MCF 10A (cell line): ENCODE measurements at regions of chr11 and their contacts with region 1.

Region 1: GRCh38 chr11:68297812-68298658 is 14.4 kb upstream of the LRP5 start:
- DNase-seq: peak; percentile 71
- H3K4me3 Mint-ChIP-seq: no peak overlapping the region
- H3K27ac Mint-ChIP-seq: no peak overlapping the region
- H3K4me1 Mint-ChIP-seq: peaks cover 13% of the 10 kb centered on the region
- H3K27me3 Mint-ChIP-seq: no peaks in the 10 kb centered on the region
- CTCF ChIP-seq: peak; percentile 98

Region 2: GRCh38 chr11:68251765-68252164 is 46.3 kb before region 1 on chr11:
- CTCF ChIA-PET with region 1: interaction called, 150 read pairs
- POLR2A ChIA-PET with region 1: interaction called, 3 read pairs
- intact Hi-C with region 1: no loop called
- DNase-seq: no peak
- H3K4me3 Mint-ChIP-seq: no peak overlapping the region
- H3K27ac Mint-ChIP-seq: no peak overlapping the region
- H3K4me1 Mint-ChIP-seq: no peaks in the 10 kb centered on the region
- H3K27me3 Mint-ChIP-seq: no peaks in the 10 kb centered on the region
- CTCF ChIP-seq: no peak

Region 3: DNA sequence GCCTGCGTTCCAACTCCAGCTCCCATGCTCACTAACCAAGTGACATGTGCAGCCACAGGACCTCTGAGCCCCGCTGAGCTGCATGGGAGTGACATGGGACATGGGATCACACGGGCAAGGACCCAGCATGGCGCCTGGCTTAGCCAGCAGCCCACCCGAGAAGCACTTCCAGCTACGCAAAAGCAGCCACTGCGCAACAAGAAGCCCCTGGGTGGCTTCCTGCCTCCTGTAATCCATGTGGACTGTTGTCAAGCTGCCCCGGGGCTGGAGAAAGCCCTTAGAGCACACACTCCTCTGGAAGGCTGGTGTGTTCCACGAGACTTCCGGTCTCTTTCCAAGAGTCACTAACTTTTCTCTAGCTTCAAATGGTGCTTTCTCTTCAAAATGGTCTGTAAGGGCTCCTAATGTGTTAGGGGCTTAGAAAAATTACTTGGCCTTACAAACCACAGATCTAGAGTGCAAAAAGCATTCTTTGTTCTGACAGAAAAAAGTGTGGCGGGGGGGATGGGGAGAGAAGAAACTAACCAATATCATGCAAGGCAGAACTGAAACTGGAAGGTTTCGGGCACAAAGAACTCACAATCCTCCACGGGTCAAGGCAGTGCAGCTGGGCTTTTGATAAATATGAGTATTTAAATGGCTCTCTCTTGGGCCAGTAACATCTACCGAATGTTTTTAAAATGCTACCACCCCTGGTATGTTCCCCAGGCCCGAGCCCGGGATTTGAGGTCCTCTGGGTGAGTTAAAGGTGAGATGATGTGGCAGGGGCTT is 31.7 kb before region 1 on chr11:
- CTCF ChIA-PET with region 1: interaction called, 68 read pairs
- POLR2A ChIA-PET with region 1: interaction called, 18 read pairs
- intact Hi-C with region 1: loop called (anchors 1 kb)
- DNase-seq: no peak
- H3K4me3 Mint-ChIP-seq: no peak overlapping the region
- H3K27ac Mint-ChIP-seq: no peak overlapping the region
- H3K4me1 Mint-ChIP-seq: peaks cover 10% of the 10 kb centered on the region
- H3K27me3 Mint-ChIP-seq: no peaks in the 10 kb centered on the region
- CTCF ChIP-seq: no peak

Region 4: GRCh38 chr11:68287419-68287818 is 10.6 kb before region 1 on chr11:
- CTCF ChIA-PET with region 1: interaction called, 16 read pairs
- POLR2A ChIA-PET with region 1: interaction called, 6 read pairs
- intact Hi-C with region 1: no loop called
- DNase-seq: no peak
- H3K4me3 Mint-ChIP-seq: no peak overlapping the region
- H3K27ac Mint-ChIP-seq: no peak overlapping the region
- H3K4me1 Mint-ChIP-seq: peaks cover 9% of the 10 kb centered on the region
- H3K27me3 Mint-ChIP-seq: no peaks in the 10 kb centered on the region
- CTCF ChIP-seq: no peak

Region 5: GRCh38 chr11:68383976-68384501 is 86.0 kb after region 1 on chr11:
- CTCF ChIA-PET with region 1: interaction called, 29 read pairs
- POLR2A ChIA-PET with region 1: interaction called, 3 read pairs
- intact Hi-C with region 1: loop called (anchors 1 kb)
- DNase-seq: peak; percentile 54
- H3K4me3 Mint-ChIP-seq: no peak overlapping the region
- H3K27ac Mint-ChIP-seq: no peak overlapping the region
- H3K4me1 Mint-ChIP-seq: no peaks in the 10 kb centered on the region
- H3K27me3 Mint-ChIP-seq: no peaks in the 10 kb centered on the region
- CTCF ChIP-seq: peak; percentile 93

Region 6: GRCh38 chr11:68643585-68643984 is 345.6 kb after region 1 on chr11:
- CTCF ChIA-PET with region 1: no interaction called
- POLR2A ChIA-PET with region 1: no interaction called
- intact Hi-C with region 1: no loop called
- DNase-seq: no peak
- H3K4me3 Mint-ChIP-seq: no peak overlapping the region
- H3K27ac Mint-ChIP-seq: no peak overlapping the region
- H3K4me1 Mint-ChIP-seq: no peaks in the 10 kb centered on the region
- H3K27me3 Mint-ChIP-seq: peaks cover 80% of the 10 kb centered on the region
- CTCF ChIP-seq: no peak

Region 7: DNA sequence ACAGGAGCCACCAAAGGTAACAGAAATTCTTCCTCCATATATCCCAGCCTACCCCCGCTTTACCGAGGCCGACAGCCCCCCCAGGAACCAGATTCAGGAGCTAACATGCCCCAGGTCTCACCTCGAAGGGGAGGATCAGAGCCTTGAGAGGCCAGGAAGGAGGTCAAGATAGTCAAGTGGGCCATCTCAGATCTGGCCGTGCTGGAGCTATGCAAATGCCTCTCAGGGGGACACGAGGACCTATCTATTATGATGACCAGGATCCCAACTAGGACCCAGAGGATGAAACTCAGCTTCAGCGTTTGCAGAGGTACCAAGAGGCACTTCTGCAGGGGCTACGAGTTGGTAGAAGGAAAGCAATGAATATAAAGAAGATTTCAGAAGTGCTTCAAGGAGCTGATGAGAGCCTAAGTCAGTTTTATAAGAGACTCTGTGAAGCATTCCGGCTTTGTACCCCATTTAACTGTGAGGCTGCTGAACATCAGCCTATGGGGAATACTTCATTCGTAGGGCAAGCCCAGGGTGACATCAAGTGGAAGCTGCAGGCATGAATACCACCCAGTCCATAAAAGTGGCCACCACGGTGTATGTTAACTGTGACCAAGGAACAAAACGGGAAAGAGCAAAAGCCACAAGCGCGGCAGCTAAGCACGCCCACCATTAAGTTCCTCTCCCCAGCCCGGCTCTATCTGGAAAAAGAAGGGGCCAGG is 571.4 kb after region 1 on chr11:
- CTCF ChIA-PET with region 1: no interaction called
- POLR2A ChIA-PET with region 1: no interaction called
- intact Hi-C with region 1: no loop called
- DNase-seq: no peak
- H3K4me3 Mint-ChIP-seq: peak overlapping the region; percentile 79
- H3K27ac Mint-ChIP-seq: peak overlapping the region; percentile 32
- H3K4me1 Mint-ChIP-seq: peaks cover 6% of the 10 kb centered on the region
- H3K27me3 Mint-ChIP-seq: peaks cover 37% of the 10 kb centered on the region
- CTCF ChIP-seq: no peak